ENCODE measurements at regions of chr10 and their contacts with region 1.

Region 1: GRCh38 chr10:70363971-70364771 is 18.3 kb downstream of the LRRC20 start:
- DNase-seq: peak; percentile 87 to 96 (median 93)
- H3K4me3 ChIP-seq: no peak overlapping the region
- H3K27ac ChIP-seq: peak overlapping the region in 3 of 5 donors; percentile 19 to 81 (median 71)
- H3K4me1 ChIP-seq: peaks cover 0 to 12% of the 10 kb centered on the region in 2 donors
- H3K27me3 ChIP-seq: no peaks in the 10 kb centered on the region
- CTCF ChIP-seq: peak; percentile 83 to 98 (median 95)
- POLR2A ChIP-seq: no peak

Region 2: GRCh38 chr10:70115948-70116682 is 248.1 kb before region 1 on chr10:
- intact Hi-C with region 1: loop called in 1 of 2 experiments (anchors 10 kb)
- DNase-seq: peak in 6 of 7 donors; percentile 46 to 79 (median 63)
- H3K4me3 ChIP-seq: no peak overlapping the region
- H3K27ac ChIP-seq: no peak overlapping the region
- H3K4me1 ChIP-seq: no peaks in the 10 kb centered on the region
- H3K27me3 ChIP-seq: no peaks in the 10 kb centered on the region
- CTCF ChIP-seq: peak; percentile 56 to 85 (median 76)
- POLR2A ChIP-seq: no peak

Region 3: DNA sequence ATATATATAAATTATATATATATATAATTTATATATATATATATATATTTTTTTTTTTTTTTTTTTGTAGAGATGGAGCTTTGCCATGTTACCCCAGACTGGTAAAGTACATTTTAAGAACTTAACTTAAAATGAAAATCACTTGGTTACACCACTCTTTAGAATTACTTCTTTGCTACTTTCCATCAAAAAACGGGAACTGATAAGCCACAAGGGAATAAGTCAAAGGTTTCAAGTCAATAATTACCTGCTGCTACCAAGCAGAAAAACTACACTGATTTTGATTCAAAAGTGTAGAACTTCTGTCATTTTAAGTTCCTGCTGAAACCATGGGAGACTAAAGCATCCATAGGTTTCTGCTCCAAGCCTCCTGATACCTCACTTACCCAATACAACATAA is 143.1 kb before region 1 on chr10:
- intact Hi-C with region 1: loop called (anchors 5 kb)
- DNase-seq: no peak
- H3K4me3 ChIP-seq: no peak overlapping the region
- H3K27ac ChIP-seq: peak overlapping the region in 2 of 5 donors; percentile 24 to 37
- H3K4me1 ChIP-seq: peaks cover 0 to 6% of the 10 kb centered on the region in 2 donors
- H3K27me3 ChIP-seq: no peaks in the 10 kb centered on the region
- CTCF ChIP-seq: no peak
- POLR2A ChIP-seq: no peak

Region 4: GRCh38 chr10:70540089-70540788 is 176.1 kb after region 1 on chr10:
- intact Hi-C with region 1: no loop called
- DNase-seq: peak in 2 of 7 donors; percentile 32 to 40
- H3K4me3 ChIP-seq: no peak overlapping the region
- H3K27ac ChIP-seq: no peak overlapping the region
- H3K4me1 ChIP-seq: no peaks in the 10 kb centered on the region
- H3K27me3 ChIP-seq: no peaks in the 10 kb centered on the region
- CTCF ChIP-seq: peak; percentile 36 to 76 (median 68)
- POLR2A ChIP-seq: no peak

Measured in adrenal gland (tissue), 19 donors.